Activated CD4-positive, alpha-beta T cell treated with anti-CD3 and anti-CD28 coated beads for 36 hours (primary cell): ENCODE measurements at regions of chr6 and their contacts with region 1.

Region 1: DNA sequence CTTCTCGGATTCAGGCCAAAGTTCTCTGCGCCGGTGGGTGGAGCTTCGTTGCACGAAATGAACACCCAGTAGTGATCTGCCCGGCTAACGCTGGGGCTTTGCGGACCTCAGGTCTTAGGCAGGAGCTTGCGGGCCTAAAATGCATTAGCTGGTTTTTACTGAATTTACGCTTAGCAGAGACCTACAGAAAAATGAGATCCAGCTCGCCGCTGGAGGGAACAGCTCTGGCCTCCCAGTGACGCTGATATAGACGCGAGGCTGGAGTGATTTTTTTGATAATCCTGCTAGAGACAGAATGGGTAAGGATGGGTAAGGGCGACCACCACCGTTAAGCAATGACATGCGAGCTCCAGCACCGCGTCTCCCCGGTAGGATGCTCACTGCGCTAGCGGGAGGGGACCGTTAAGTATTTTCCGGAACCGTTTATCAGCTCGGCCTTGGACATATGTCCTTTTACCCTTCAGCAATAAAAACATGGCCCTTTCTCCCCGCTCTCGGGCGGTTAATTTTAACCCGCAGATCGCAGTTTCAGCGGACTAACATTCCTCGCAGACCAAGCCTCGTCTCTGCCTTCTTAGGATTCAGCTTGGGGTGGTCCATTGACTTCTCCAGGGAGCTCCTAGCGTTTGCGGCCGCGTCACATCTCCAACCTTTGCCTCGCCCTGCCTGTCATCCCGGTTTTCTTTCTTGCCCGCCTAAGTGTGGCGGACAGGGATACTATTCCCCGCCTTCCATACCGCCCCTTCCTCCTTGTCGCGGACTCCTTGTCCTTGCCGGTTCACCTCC is 109.3 kb downstream of the GPX5 start:
- DNase-seq: no peak
- ATAC-seq: no peak
- H3K4me3 Mint-ChIP-seq: peak overlapping the region; percentile 46
- H3K27ac Mint-ChIP-seq: no peak overlapping the region
- H3K4me1 Mint-ChIP-seq: peaks cover 14% of the 10 kb centered on the region
- H3K27me3 Mint-ChIP-seq: peaks cover 70% of the 10 kb centered on the region

Region 2: GRCh38 chr6:27190126-27190525 is 1444.8 kb before region 1 on chr6:
- CTCF ChIA-PET with region 1: no interaction called
- POLR2A ChIA-PET with region 1: no interaction called
- intact Hi-C with region 1: no loop called
- DNase-seq: no peak
- ATAC-seq: no peak
- H3K4me3 Mint-ChIP-seq: no peak overlapping the region
- H3K27ac Mint-ChIP-seq: no peak overlapping the region
- H3K4me1 Mint-ChIP-seq: peaks cover 10% of the 10 kb centered on the region
- H3K27me3 Mint-ChIP-seq: peaks cover 2% of the 10 kb centered on the region

Region 3: DNA sequence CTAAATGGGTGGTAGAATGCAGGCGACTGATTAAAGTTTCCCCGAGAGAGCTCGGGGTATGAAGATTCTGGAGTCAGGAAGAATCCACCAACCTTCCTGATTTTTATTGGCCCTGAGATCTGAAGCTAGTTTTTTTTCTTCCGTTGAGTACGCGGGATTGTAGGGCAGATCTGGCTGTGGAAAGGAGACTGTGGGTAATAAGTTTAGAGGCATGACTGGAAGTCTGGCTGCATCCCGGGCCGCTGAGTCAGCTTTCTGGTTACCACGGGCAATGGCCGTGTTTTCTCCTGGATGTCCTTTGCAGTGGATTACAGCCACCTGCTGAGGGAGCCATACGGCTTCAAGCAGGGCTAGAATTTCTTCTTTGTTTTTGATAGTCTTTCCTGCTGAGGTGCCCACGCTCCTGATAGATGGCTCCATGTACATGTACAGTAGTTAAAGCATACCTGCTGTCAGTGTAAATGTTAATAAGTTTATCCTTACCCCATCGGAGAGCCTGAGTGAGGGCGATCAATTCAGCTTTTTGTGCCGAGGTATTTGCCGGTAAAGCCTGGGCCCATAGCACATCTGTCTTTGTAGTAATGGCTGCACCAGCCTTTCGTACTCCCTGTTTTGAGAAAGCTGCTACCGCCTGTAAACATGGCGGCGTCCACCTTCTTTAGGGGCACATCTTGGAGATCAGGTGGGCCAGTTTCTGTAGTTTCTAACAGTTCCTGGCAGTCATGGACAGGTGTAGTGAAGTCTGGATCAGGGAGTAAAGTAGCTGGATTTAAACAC is 134.9 kb after region 1 on chr6:
- CTCF ChIA-PET with region 1: no interaction called
- POLR2A ChIA-PET with region 1: no interaction called
- intact Hi-C with region 1: loop called in 1 of 2 experiments (anchors 10 kb)
- DNase-seq: no peak
- ATAC-seq: no peak
- H3K4me3 Mint-ChIP-seq: no peak overlapping the region
- H3K27ac Mint-ChIP-seq: no peak overlapping the region
- H3K4me1 Mint-ChIP-seq: peaks cover 7% of the 10 kb centered on the region
- H3K27me3 Mint-ChIP-seq: peaks cover 94% of the 10 kb centered on the region